Posterior cingulate gyrus (tissue), 11 donors: ENCODE measurements at regions of chr5 and their contacts with region 1.

Region 1: DNA sequence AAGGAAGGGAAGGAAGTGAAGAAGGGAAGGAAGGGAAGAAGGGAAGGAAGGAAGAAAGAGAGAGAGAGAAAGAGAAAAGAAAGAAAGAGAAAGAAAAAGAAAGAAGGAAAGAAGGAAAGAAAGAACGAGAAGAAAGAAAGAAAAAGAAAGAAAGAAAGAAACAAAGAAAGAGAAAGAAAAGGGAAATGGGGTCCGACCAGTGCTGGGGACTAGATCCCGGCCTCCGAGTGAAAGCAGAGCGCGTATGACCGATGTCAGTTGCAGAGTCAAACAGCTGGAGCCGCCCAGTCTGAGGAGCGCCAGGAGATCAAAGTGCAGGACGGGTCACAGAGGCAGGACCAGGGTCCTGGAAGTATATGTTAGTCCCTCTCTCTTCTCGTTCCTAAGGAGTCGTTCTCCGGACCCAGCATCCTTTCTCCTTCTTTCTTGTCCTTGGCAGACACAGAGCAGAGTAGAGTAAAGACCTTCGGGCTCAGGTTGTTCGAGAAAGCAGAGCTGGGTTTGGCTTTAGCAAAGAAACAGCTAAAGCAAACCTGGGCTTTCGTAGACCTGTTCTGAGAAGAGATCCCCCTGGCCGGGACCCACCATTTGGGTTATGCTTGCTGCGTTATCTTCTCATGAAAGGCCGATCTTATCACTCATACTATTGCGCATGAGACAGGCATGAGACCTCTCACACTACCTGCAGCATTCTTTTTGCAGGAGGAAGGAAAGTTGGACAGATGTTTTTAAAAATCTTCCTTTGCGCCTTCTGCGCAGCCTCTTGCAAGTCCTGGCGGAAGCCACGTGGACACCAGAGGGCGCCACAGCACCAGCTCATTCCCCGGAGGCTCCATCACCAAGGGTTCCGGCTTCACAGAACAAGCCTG is 305.2 kb upstream of the MSX2 start:
- DNase-seq: peak; percentile 83 to 99 (median 96)

Region 2: DNA sequence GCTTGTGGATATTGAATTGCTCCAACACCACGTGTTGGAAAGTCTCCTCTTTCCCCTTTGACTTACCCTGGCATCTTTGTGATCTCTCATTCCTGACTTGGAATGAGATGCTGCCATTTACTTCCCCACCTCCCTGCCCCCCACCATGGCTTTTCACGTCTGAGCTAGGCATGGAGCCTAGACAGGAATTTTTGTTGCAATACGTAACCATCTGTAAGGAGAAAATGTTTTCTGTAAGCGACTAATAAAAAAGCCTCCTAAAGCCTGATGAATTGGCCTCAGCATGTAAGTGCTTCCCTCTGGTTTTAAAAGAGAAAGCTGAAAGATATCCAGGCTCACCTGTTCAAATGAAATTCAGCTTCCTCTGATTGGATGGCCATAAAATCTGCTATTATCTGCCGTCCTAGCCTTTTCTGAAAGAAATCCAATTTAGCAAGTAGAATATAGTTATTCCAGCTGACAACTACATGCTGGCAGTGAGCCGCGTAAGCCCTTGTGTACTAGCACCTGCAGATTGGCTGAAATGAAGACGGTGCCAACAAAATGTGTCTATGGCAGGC is 173.6 kb before region 1 on chr5:
- intact Hi-C with region 1: no loop called
- DNase-seq: no peak

Region 3: GRCh38 chr5:174300941-174301761 is 118.0 kb before region 1 on chr5:
- intact Hi-C with region 1: no loop called
- DNase-seq: peak in 3 of 10 donors; percentile 59 to 85 (median 80)

Region 4: DNA sequence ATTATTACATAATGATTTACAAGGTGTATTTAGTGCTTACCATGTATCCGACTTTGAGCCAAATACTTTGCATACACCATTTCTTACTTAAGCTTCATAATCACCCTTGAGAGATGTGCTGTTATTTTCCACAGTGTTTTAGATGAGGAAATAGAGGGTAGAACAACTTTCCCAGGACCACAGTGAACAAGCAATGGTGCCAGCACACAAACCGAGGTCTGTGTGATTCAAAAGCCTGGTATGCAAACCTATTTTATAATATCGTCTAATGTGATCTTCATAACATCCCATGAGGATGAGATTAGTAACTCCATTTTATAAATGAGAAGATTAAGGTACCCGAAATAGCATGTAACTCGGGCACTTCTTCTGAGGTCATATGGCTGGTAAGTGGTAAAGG is 78.9 kb before region 1 on chr5:
- intact Hi-C with region 1: loop called (anchors 2 kb)
- DNase-seq: no peak

Region 5: GRCh38 chr5:174735498-174736330 is 316.6 kb after region 1 on chr5:
- intact Hi-C with region 1: loop called (anchors 1 kb)
- DNase-seq: peak in 4 of 10 donors; percentile 7 to 39 (median 27)

Region 6: GRCh38 chr5:174793684-174794328 is 374.6 kb after region 1 on chr5:
- intact Hi-C with region 1: loop called (anchors 1 kb)
- DNase-seq: peak; percentile 41 to 96 (median 70)

Region 7: DNA sequence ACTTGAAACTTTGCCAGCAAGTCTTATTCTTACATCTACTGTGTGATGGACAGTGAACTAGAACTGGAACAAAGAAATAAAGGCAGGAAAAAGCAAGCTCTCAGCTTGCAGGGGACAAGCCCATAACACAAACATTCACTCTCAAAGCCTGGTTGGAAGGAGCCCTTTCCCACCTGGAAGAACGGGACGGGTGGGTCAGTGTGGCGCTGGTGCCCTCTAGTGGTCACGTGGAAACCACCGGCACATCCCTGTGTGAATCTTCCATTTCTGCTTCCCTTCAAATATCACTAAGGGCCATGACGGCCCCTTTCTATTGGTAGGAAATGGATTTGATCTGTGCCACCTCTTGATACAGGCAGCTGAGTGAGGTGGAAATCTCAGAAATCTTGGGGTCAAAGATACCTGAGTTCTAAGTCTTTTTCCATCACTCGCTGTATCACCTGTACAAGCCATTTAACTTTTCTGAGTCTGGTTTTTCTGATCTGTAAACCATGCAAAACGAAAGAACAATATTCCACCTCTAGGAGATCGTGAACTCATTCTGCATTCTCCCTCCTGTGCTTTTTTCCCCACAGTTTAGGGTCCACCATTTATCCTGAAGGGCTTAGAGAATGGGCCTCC is 516.8 kb after region 1 on chr5:
- intact Hi-C with region 1: loop called (anchors 5 kb)
- DNase-seq: peak; percentile 33 to 95 (median 76)